CD4-positive, alpha-beta T cell (primary cell): ENCODE measurements at regions of chrX and their contacts with region 1.

Region 1: DNA sequence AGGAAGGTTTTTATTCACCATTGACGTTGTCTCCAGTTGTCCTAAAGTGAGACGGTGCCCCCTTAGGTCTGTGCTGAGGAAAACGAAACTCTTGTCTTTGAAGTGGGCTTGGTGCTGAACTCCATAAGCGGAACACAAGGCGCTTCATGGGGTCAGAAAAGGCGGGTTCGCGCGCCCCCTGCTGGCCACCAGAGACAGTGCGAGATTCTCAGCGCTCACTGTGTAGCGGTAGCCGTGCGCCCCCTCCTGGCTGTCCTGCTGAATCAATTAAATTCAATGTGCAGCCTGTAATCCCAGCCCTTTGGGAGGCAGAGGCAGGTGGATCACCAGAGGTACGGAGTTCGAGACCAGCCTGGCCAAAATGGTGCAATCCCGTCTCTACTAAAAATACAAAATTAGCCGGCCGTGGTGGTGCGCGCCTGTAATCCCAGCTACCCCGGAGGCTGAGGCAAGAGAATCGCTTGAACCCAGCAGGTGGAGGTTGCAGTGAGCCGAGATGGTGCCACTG is 64.1 kb downstream of the RLIM start:
- DNase-seq: peak; percentile 70 to 94 (median 81)
- ATAC-seq: peak; percentile 95
- H3K4me3 ChIP-seq: peak overlapping the region; percentile 13
- H3K4me3 Mint-ChIP-seq: peak overlapping the region; percentile 63
- H3K27ac ChIP-seq: no peak overlapping the region
- H3K27ac Mint-ChIP-seq: no peak overlapping the region
- H3K4me1 ChIP-seq: peaks cover 7% of the 10 kb centered on the region
- H3K4me1 Mint-ChIP-seq: peaks cover 5% of the 10 kb centered on the region
- H3K27me3 ChIP-seq: no peaks in the 10 kb centered on the region
- H3K27me3 Mint-ChIP-seq: no peaks in the 10 kb centered on the region
- CTCF ChIP-seq: peak; percentile 92

Region 2: DNA sequence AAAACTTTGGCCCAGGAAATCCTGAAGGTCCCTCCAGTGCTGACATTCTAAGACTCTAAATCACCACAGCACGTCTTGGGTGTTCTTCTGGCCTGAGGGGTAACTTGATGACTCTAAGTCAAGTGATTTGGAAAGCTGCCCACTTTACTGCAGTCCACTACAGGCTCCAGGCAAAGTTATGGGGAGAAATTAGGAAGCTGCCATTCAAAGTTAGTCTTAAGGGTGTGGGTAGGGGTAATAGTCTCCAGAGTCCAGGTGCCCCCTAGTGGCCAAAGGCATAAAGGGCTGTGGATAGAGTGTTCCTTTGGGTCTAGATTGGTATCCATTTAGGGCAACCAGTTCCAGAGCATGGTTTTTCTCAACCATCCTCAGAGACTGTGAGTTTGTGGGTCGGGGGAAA is 167.7 kb before region 1 on chrX:
- CTCF ChIA-PET with region 1: no interaction called
- POLR2A ChIA-PET with region 1: no interaction called
- intact Hi-C with region 1: loop called (anchors 2 kb)
- DNase-seq: peak; percentile 16 to 69 (median 42)
- ATAC-seq: peak; percentile 49
- H3K4me3 ChIP-seq: no peak overlapping the region
- H3K4me3 Mint-ChIP-seq: no peak overlapping the region
- H3K27ac ChIP-seq: no peak overlapping the region
- H3K27ac Mint-ChIP-seq: no peak overlapping the region
- H3K4me1 ChIP-seq: no peaks in the 10 kb centered on the region
- H3K4me1 Mint-ChIP-seq: no peaks in the 10 kb centered on the region
- H3K27me3 ChIP-seq: peaks cover 0 to 4% of the 10 kb centered on the region in 2 experiments
- H3K27me3 Mint-ChIP-seq: peaks cover 4% of the 10 kb centered on the region
- CTCF ChIP-seq: peak; percentile 58

Region 3: DNA sequence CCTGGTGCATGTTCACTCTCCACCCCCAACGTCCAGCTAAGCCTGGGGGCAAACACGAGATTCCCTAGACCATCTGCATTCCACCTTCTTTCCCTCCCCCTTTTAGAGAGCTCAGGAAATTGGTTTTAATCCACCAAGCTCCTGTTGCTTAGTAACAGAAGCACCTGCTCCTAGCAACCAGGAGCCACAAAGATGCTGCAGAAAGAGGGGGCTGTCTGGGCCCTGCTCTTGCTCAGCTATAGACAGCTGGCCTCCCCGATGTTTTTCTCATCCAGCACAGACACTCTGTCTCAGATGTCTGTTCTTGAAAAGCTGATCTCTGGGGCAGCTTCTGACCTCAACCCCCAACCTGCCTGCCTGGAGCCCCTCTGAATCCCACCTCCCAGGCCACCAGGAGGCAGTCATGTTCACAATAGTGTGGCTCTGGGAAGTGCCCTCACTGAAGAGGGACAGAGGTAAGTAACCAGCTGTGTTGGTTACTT is 57.6 kb before region 1 on chrX:
- CTCF ChIA-PET with region 1: no interaction called
- POLR2A ChIA-PET with region 1: no interaction called
- intact Hi-C with region 1: loop called in 1 of 2 experiments (anchors 5 kb)
- DNase-seq: peak in 8 of 14 experiments; percentile 0 to 30 (median 8)
- ATAC-seq: no peak
- H3K4me3 ChIP-seq: no peak overlapping the region
- H3K4me3 Mint-ChIP-seq: no peak overlapping the region
- H3K27ac ChIP-seq: no peak overlapping the region
- H3K27ac Mint-ChIP-seq: no peak overlapping the region
- H3K4me1 ChIP-seq: no peaks in the 10 kb centered on the region
- H3K4me1 Mint-ChIP-seq: no peaks in the 10 kb centered on the region
- H3K27me3 ChIP-seq: no peaks in the 10 kb centered on the region
- H3K27me3 Mint-ChIP-seq: no peaks in the 10 kb centered on the region
- CTCF ChIP-seq: no peak